Posterior cingulate gyrus (tissue), 11 donors: ENCODE measurements at regions of chr6 and their contacts with region 1.

Region 1: DNA sequence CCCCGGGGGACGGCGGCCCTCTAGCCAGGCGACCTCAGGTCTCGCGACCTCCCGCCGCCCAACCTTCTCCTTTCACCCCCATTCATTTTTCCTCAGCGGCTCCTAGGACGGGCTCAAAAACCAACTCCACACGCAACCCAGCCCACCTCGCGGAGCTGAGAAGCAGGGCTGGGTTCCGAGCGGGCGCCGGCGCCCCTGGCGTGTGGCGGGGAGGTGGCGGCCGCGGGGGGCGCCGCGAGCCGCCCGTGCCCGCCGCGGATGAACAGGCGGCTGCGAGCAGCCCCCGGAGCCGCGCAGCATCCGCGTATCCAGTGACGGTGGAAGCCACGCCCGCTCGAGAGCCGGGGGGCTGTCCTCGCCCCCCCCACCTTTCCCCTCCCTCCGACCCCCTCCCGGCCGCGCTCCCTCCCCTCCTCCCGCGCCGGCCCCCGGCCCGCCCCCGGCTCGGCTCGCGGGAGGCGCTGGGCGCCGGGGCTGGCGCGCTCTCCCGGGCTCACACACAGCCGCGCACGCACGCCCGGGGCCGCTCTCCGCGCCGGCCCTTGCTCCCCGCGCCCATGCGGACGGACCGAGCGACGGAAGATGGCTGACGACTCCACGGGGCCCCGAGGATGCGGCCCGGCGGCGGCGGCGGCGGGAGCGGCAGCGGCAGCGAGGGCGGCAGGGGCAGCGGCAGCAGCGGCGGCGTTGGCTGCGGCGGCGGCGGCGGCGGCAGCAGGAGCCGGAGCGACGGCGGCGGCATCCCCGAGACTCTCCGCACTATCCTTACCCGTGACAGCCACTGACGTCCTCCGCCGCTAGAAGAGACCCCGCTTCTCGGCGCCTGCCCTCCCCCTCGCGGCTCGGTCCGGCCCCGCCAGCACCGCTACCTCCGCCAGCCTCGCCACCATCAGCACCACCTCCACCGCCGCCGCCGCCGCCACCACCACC is at the start of gene SOBP:
- DNase-seq: peak; percentile 49 to 95 (median 72)

Region 2: DNA sequence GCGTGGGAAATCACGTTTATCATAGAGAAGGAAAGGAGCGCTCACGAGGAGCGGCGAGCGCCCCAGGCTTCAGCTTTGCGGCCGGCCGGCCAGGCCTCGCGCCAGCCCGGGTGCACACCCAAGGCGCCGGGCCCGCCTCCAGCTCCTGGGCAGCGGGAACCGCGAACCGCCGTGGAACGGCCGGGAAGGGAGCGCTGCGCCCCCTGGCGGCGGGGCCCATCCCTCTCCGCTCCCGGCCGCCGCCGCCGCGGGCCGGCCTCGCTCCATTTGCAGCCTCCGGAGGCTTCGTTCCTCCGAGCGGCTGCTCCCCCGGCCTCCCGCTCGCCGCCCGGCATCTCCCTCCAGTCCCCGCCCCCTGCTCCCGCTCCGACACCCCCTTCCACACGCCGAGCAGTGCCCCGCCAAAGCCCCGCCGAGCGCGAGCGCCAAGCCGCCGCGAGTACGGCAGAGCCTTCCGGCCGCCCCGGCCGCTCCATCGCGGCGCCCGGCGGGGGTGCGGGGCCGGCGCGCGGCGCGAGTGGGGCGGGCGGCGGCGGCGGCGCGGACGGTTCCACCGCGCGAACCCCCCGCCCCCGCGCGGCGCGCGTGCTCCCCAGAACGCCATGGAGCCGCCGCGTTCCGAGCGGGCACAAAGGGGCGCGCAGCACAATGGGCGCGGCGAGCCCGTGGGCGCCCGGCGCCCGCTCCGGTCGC is 375.5 kb before region 1 on chr6:
- intact Hi-C with region 1: loop called (anchors 10 kb)
- DNase-seq: peak; percentile 72 to 96 (median 77)

Region 3: GRCh38 chr6:107401573-107401972 is 88.3 kb before region 1 on chr6:
- intact Hi-C with region 1: no loop called
- DNase-seq: no peak

Region 4: DNA sequence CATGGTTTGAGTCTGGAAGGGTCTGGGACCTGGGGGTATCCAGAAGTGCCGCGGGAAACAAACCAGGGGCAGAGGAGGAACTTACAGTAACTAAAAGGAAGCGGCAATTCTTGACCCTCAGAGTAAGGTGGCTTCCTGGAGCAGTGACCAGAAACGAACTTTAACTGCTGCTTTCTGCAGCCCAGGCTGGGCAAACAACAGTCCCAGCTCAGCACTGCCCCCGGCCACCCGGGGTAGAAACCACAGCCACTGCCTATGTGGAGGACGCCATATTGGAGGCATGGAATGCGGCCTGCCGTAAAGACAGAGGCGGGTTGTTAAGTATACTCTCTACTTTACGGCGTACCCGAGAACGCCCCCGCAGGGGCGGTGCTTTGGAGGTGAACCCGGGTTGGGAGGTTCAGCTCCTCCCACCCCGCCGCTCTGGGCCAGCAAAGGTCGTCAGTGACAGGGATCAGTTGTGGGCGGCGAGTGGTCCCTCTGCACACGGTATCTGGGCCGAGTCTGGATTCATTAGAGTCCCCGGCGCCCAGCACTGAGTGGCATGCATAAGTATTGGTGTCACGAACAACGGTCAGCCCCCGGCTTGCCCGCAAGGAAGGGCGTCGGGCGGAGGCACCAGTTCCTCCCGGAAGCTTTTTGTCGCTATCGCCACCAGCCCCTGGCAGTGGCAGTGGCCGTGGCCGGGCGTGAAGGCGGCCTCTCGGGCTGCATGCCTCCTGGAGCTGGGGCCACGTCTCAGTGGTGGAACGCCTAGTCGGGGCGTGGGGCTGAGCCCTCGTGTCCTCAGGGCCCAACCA is 30.4 kb before region 1 on chr6 and contains the start of gene PDSS2:
- intact Hi-C with region 1: loop called (anchors 1 kb)
- DNase-seq: peak; percentile 96 to 99 (median 98)

Region 5: DNA sequence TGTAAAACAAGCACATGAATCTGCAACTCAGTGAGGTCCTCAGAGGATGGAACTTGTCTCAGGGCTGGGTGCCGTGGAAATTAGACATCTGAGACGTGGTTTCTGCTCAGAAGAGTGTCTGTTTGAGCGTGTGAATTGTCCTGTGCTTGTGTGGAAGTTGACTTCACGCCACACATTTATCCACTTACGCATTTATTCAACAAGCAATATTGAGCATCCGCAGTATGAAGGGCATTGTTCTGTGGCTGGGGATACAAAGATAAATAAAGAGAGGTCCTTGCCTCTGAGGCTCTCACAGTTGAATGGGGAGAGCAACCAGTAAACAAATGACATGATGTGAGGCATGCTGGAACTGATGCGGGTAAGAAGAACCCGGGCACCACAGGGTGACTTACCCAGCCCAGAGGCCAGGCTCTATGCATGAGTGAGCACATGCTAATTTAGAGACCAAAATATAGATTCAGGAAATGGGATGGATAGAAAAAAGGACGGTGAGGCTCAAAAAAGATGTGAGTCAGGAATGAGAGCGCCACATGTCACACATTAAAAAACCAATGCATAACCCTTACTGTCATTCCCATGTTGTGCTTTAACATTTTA is 60.4 kb after region 1 on chr6:
- intact Hi-C with region 1: loop called (anchors 10 kb)
- DNase-seq: peak in 1 of 10 donors; percentile 23

Region 6: GRCh38 chr6:107585815-107586435 is 96.0 kb after region 1 on chr6:
- intact Hi-C with region 1: loop called (anchors 10 kb)
- DNase-seq: peak in 2 of 10 donors; percentile 25 to 50